ENCODE measurements at regions of chr12 and their contacts with region 1.

Region 1: GRCh38 chr12:124688356-124688992 is 121.1 kb upstream of the NCOR2 start:
- DNase-seq: no peak
- H3K4me3 ChIP-seq: no peak overlapping the region
- H3K27me3 ChIP-seq: no peaks in the 10 kb centered on the region
- CTCF ChIP-seq: no peak

Region 2: DNA sequence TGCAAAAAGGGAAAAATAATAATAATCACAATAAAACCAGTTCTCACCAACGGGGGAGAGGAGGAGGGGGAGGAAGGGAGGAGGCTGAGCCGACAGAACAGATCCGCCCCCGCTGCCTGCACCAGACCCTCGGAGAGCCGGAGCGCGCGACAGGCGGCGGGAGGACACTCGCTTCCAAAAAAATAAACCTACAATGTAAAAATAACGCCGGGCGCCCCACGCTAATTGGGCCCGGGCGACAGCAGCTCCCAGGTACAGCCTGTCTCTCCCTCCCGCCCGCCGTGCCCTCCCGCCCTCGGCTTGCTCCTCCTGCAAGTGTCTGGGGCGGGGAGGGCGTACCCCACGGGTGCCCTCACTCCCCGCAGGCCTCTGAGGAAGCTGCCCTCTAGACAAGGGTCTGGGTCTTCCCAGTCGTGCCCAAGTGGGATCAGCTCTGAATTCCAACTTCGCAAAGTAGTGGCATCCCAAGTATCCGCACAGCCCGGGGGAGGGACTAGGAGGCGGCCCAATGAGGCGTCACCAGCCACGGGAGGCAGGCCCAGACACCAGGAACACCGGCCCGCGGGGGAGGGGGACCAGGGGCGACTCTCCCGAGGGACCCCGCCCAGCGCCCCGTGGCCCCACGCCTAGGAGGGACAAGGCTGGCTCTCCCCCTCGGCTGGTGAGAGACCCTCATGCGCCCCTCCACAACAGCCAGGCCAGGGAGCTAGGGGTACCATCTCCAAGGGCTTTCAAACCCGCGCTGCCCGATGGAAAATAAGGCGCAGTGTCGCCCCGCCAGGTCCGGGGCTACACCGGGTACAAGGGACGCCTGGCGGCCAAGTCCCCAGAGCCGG is 122.1 kb before region 1 on chr12:
- CTCF ChIA-PET with region 1: interaction called, 3 read pairs
- POLR2A ChIA-PET with region 1: interaction called, 10 read pairs
- DNase-seq: no peak
- H3K4me3 ChIP-seq: peak overlapping the region; percentile 74
- H3K27me3 ChIP-seq: no peaks in the 10 kb centered on the region; the same call in 1 of the 2 replicates
- CTCF ChIP-seq: no peak

Region 3: DNA sequence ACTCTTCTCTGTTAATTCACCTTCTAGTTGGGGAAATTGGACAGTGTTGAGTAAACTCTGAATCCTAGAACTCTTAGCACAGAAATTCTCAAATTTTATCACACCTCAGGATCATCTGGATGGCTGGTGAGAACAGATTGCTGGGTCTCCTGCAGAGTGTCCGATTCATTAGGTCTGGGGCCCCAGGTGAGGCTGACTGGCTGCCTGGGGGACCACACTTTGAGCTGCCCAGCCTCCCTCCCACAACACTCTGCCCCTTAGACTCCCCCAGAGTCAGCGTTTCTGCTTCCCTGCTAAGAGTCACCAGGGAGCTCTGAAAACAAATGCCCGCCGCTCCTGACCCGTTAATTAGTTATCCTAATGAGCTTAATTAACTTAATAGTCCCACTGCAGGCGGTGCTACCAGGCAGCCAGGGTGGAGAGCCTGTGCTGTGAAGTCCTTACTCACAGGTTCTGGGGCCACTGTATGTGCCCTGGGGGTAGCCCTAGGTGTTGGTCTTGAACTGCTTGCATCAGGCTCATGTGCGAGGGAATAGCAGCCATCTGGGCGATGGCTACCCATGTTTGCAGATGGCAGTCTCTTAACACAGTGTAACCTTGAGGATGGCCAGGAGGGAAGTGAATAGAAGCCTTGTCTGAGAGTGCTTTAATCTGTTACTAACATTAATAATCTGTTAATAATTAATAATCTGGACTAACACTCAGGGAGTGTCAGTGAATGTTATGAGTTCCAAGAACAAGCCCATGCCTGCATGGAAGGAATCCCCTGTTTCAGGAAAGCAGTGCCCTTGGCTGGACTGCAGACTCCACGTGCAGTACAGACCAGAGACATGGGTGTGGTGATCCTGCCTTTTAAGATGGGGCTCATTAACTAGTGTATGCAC is 412.3 kb after region 1 on chr12:
- CTCF ChIA-PET with region 1: no interaction called
- POLR2A ChIA-PET with region 1: no interaction called
- DNase-seq: no peak
- H3K4me3 ChIP-seq: no peak overlapping the region
- H3K27me3 ChIP-seq: no peaks in the 10 kb centered on the region
- CTCF ChIP-seq: no peak